Stomach (tissue), 19 donors: ENCODE measurements at regions of chr19 and their contacts with region 1.

Region 1: GRCh38 chr19:49983645-49984229 is 22.8 kb upstream of the SIGLEC11 start:
- DNase-seq: peak; percentile 67 to 77
- H3K4me3 ChIP-seq: no peak overlapping the region
- H3K27ac ChIP-seq: no peak overlapping the region
- H3K4me1 ChIP-seq: no peaks in the 10 kb centered on the region
- H3K27me3 ChIP-seq: no peaks in the 10 kb centered on the region
- CTCF ChIP-seq: peak in 5 of 7 experiments; percentile 54 to 84 (median 82)
- EP300 ChIP-seq: no peak
- POLR2A ChIP-seq: no peak

Region 2: GRCh38 chr19:49937750-49938381 is 45.9 kb before region 1 on chr19:
- intact Hi-C with region 1: loop called (anchors 2 kb)
- DNase-seq: peak; percentile 82 to 92
- H3K4me3 ChIP-seq: peak overlapping the region in 3 of 4 donors; percentile 5 to 27 (median 18)
- H3K27ac ChIP-seq: no peak overlapping the region
- H3K4me1 ChIP-seq: peaks cover 4 to 12% (median 8%) of the 10 kb centered on the region in 4 donors
- H3K27me3 ChIP-seq: peaks cover 0 to 3% (median 0%) of the 10 kb centered on the region in 3 donors
- CTCF ChIP-seq: peak in 5 of 7 experiments; percentile 84 to 95 (median 92)
- EP300 ChIP-seq: no peak
- POLR2A ChIP-seq: no peak

Region 3: GRCh38 chr19:50036908-50037307 is 53.2 kb after region 1 on chr19:
- intact Hi-C with region 1: no loop called
- DNase-seq: no peak
- H3K4me3 ChIP-seq: no peak overlapping the region
- H3K27ac ChIP-seq: no peak overlapping the region
- H3K4me1 ChIP-seq: no peaks in the 10 kb centered on the region
- H3K27me3 ChIP-seq: no peaks in the 10 kb centered on the region
- CTCF ChIP-seq: no peak
- EP300 ChIP-seq: no peak
- POLR2A ChIP-seq: no peak